B cell (primary cell): ENCODE measurements at regions of chr19 and their contacts with region 1.

Region 1: GRCh38 chr19:17107525-17108452 is 32.2 kb downstream of the MYO9B start:
- DNase-seq: peak; percentile 35
- ATAC-seq: no peak
- H3K4me3 ChIP-seq: no peak overlapping the region
- H3K4me3 Mint-ChIP-seq: peak overlapping the region; percentile 72
- H3K27ac ChIP-seq: peak overlapping the region; percentile 18 to 45
- H3K27ac Mint-ChIP-seq: peak overlapping the region; percentile 87
- H3K4me1 ChIP-seq: peaks cover 88 to 97% of the 10 kb centered on the region in 2 donors
- H3K4me1 Mint-ChIP-seq: peaks cover 87% of the 10 kb centered on the region
- H3K27me3 ChIP-seq: no peaks in the 10 kb centered on the region
- H3K27me3 Mint-ChIP-seq: no peaks in the 10 kb centered on the region
- CTCF ChIP-seq: no peak

Region 2: DNA sequence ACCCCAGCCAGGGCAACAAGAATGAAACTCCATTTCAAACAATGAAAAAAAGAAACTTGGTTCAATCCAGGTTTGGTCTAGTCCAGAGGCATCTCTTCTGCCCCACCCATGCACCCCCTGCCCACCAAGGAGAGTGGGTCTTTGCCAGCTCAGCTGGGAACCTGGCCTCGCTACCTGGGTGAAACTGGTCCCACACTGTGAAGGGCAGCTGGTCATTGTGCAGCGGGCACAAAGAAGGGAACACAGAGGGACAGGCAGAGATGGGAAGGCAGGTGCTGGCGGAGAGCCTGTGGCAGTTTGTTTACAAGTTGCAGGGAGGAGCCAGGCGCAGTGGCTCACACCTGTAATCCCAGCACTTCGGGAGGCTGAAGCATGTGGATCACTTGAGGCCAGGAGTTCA is 131.3 kb before region 1 on chr19:
- CTCF ChIA-PET with region 1: no interaction called
- POLR2A ChIA-PET with region 1: no interaction called
- intact Hi-C with region 1: no loop called
- DNase-seq: no peak
- ATAC-seq: no peak
- H3K4me3 ChIP-seq: no peak overlapping the region
- H3K4me3 Mint-ChIP-seq: no peak overlapping the region
- H3K27ac ChIP-seq: no peak overlapping the region
- H3K27ac Mint-ChIP-seq: no peak overlapping the region
- H3K4me1 ChIP-seq: no peaks in the 10 kb centered on the region
- H3K4me1 Mint-ChIP-seq: no peaks in the 10 kb centered on the region
- H3K27me3 ChIP-seq: peaks cover 0 to 5% (median 1%) of the 10 kb centered on the region in 4 experiments
- H3K27me3 Mint-ChIP-seq: peaks cover 26% of the 10 kb centered on the region
- CTCF ChIP-seq: no peak

Region 3: GRCh38 chr19:17069218-17069617 is 38.6 kb before region 1 on chr19:
- CTCF ChIA-PET with region 1: interaction called, 4 read pairs
- POLR2A ChIA-PET with region 1: no interaction called
- intact Hi-C with region 1: loop called (anchors 1 kb)
- DNase-seq: no peak
- ATAC-seq: no peak
- H3K4me3 ChIP-seq: no peak overlapping the region
- H3K4me3 Mint-ChIP-seq: no peak overlapping the region
- H3K27ac ChIP-seq: no peak overlapping the region
- H3K27ac Mint-ChIP-seq: no peak overlapping the region
- H3K4me1 ChIP-seq: peaks cover 24 to 45% of the 10 kb centered on the region in 2 donors
- H3K4me1 Mint-ChIP-seq: peaks cover 56% of the 10 kb centered on the region
- H3K27me3 ChIP-seq: no peaks in the 10 kb centered on the region
- H3K27me3 Mint-ChIP-seq: no peaks in the 10 kb centered on the region
- CTCF ChIP-seq: no peak

Region 4: GRCh38 chr19:17090583-17090982 is 17.2 kb before region 1 on chr19:
- CTCF ChIA-PET with region 1: interaction called, 6 read pairs
- POLR2A ChIA-PET with region 1: interaction called, 4 read pairs
- intact Hi-C with region 1: loop called (anchors 1 kb)
- DNase-seq: peak; percentile 84
- ATAC-seq: peak; percentile 73
- H3K4me3 ChIP-seq: peak overlapping the region in 1 of 5 experiments; percentile 1
- H3K4me3 Mint-ChIP-seq: peak overlapping the region; percentile 48
- H3K27ac ChIP-seq: peak overlapping the region; percentile 82 to 88
- H3K27ac Mint-ChIP-seq: peak overlapping the region; percentile 47
- H3K4me1 ChIP-seq: peaks cover 36 to 46% of the 10 kb centered on the region in 2 donors
- H3K4me1 Mint-ChIP-seq: peaks cover 57% of the 10 kb centered on the region
- H3K27me3 ChIP-seq: no peaks in the 10 kb centered on the region
- H3K27me3 Mint-ChIP-seq: no peaks in the 10 kb centered on the region
- CTCF ChIP-seq: no peak

Region 5: GRCh38 chr19:17125715-17126677 is 18.2 kb after region 1 on chr19:
- CTCF ChIA-PET with region 1: interaction called, 13 read pairs
- POLR2A ChIA-PET with region 1: interaction called, 13 read pairs
- intact Hi-C with region 1: loop called (anchors 1 kb)
- DNase-seq: peak; percentile 86
- ATAC-seq: peak; percentile 87
- H3K4me3 ChIP-seq: peak overlapping the region; percentile 8 to 52 (median 37)
- H3K4me3 Mint-ChIP-seq: peak overlapping the region; percentile 91
- H3K27ac ChIP-seq: peak overlapping the region; percentile 84 to 86
- H3K27ac Mint-ChIP-seq: peak overlapping the region; percentile 99
- H3K4me1 ChIP-seq: peaks cover 27 to 72% of the 10 kb centered on the region in 2 donors
- H3K4me1 Mint-ChIP-seq: peaks cover 55% of the 10 kb centered on the region
- H3K27me3 ChIP-seq: no peaks in the 10 kb centered on the region
- H3K27me3 Mint-ChIP-seq: no peaks in the 10 kb centered on the region
- CTCF ChIP-seq: no peak

Region 6: DNA sequence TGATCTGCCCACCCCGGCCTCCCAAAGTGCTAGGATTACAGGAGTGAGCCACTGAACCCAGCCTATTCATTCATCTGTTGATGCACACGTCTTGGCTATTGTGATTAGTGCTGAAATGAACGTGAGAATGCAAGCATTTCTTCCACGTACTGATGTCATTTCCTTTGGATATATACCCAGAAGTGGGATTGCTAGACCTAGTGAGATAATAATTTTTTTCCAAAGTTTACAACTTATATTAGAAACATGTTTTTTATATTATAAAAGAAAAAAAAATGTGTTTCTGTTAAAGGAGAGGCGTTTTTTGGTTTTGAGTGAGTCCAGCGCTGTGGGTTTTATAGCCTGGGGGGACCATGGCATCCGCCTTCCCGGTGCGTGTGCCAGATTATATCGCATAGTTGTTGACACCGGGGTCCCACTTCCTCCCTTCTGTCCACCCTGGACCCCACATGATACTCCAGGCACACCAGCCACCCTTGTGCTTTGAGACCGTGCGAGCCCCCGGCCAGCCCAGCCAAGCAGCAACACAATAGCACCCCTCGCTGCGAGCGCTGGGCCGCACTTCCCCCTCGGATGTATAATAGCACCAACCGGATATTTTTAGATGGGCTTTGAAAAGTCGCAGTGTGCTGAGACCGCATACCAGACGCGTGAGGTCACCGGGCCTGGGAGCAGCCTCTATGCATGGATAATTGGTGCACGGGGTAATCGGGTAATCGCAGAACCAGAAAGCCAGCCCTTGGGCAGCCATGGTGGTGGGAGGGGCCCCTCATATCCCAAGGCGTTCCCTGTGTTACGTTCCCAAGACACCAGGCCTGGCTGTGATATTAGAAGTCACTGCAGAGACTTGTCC is 27.4 kb after region 1 on chr19:
- CTCF ChIA-PET with region 1: interaction called, 4 read pairs
- POLR2A ChIA-PET with region 1: no interaction called
- intact Hi-C with region 1: loop called (anchors 1 kb)
- DNase-seq: peak; percentile 88
- ATAC-seq: peak; percentile 88
- H3K4me3 ChIP-seq: peak overlapping the region in 3 of 5 experiments; percentile 22 to 49 (median 31)
- H3K4me3 Mint-ChIP-seq: peak overlapping the region; percentile 86
- H3K27ac ChIP-seq: peak overlapping the region; percentile 87 to 95
- H3K27ac Mint-ChIP-seq: peak overlapping the region; percentile 96
- H3K4me1 ChIP-seq: peaks cover 38 to 55% of the 10 kb centered on the region in 2 donors
- H3K4me1 Mint-ChIP-seq: peaks cover 60% of the 10 kb centered on the region
- H3K27me3 ChIP-seq: no peaks in the 10 kb centered on the region
- H3K27me3 Mint-ChIP-seq: no peaks in the 10 kb centered on the region
- CTCF ChIP-seq: no peak

Region 7: DNA sequence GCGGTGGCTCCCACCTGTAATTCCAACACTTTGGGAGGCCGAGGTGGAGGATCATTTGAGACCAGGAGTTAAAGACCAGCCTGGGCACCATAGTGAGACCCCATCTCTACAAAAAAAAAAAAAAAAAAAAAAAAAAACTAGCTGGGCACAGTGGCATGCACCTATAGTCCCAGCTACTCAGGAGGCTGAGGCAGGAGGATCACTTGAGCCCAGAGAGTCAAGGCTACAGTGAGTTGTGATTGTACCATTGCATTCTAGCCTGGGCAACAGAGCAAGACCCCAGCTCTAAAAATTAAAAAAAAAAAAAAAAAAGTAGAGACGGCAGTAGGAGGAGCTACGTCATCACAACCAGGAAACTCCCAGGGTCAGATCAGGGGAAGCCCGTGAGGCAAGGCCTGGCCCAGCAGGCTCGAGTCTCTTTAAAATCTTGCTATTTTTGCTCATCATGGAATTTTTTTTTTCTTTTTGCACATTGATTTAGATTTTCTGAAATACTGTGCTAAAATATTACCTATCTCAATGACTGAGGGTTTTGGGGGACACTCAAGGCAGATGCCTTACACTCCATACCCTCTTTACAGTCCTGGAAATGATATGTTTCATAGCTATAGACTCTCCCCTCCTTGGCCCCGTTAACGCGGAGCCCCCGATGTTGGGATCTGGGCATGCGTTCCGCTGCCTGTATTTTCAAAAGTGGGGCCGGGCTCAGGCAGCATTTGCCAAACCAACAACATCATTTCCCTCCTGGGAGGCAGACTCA is 62.9 kb after region 1 on chr19:
- CTCF ChIA-PET with region 1: no interaction called
- POLR2A ChIA-PET with region 1: no interaction called
- intact Hi-C with region 1: no loop called
- DNase-seq: peak; percentile 55
- ATAC-seq: peak; percentile 43
- H3K4me3 ChIP-seq: no peak overlapping the region
- H3K4me3 Mint-ChIP-seq: no peak overlapping the region
- H3K27ac ChIP-seq: peak overlapping the region in 1 of 2 donors; percentile 50
- H3K27ac Mint-ChIP-seq: peak overlapping the region; percentile 63
- H3K4me1 ChIP-seq: no peaks in the 10 kb centered on the region
- H3K4me1 Mint-ChIP-seq: peaks cover 6% of the 10 kb centered on the region
- H3K27me3 ChIP-seq: no peaks in the 10 kb centered on the region
- H3K27me3 Mint-ChIP-seq: no peaks in the 10 kb centered on the region
- CTCF ChIP-seq: no peak